ENCODE measurements at regions of chr1 and their contacts with region 1.

Region 1: GRCh38 chr1:113389953-113390834 is at the start of gene MAGI3:
- DNase-seq: peak; percentile 84 to 97 (median 91)
- ATAC-seq: peak; percentile 95
- H3K4me3 ChIP-seq: peak within 1 kb of the TSS; percentile 88
- H3K4me3 Mint-ChIP-seq: peak within 1 kb of the TSS; percentile 84 to 98 (median 94)
- H3K27ac ChIP-seq: peak within 1 kb of the TSS; percentile 71
- H3K27ac Mint-ChIP-seq: peak within 1 kb of the TSS; percentile 38 to 89 (median 85)
- H3K4me1 ChIP-seq: peaks cover 0 to 16% of the 10 kb centered on the region in 2 donors
- H3K4me1 Mint-ChIP-seq: peaks cover 22 to 31% (median 26%) of the 10 kb centered on the region in 7 donors
- H3K27me3 ChIP-seq: no peaks in the 10 kb centered on the region
- H3K27me3 Mint-ChIP-seq: peaks cover 0 to 42% (median 6%) of the 10 kb centered on the region in 5 donors
- total RNA-seq, gene MAGI3: 5.7 to 8.8 (median 7.2) TPM

Region 2: GRCh38 chr1:112715264-112716053 is 674.7 kb before region 1 on chr1 and contains the start of gene PPM1J:
- CTCF ChIA-PET with region 1: no interaction called
- POLR2A ChIA-PET with region 1: no interaction called
- intact Hi-C with region 1: loop called (anchors 1 to 5 kb)
- DNase-seq: peak; percentile 86 to 99 (median 91)
- ATAC-seq: peak; percentile 89
- H3K4me3 ChIP-seq: peak within 1 kb of the TSS; percentile 81
- H3K4me3 Mint-ChIP-seq: peak within 1 kb of the TSS; percentile 86 to 95 (median 92)
- H3K27ac ChIP-seq: peak within 1 kb of the TSS; percentile 34
- H3K27ac Mint-ChIP-seq: peak within 1 kb of the TSS in 8 of 9 donors; percentile 63 to 91 (median 82)
- H3K4me1 ChIP-seq: peaks cover 13% of the 10 kb centered on the region in 2 donors
- H3K4me1 Mint-ChIP-seq: peaks cover 17 to 37% (median 21%) of the 10 kb centered on the region in 7 donors
- H3K27me3 ChIP-seq: no peaks in the 10 kb centered on the region
- H3K27me3 Mint-ChIP-seq: peaks cover 0 to 45% (median 12%) of the 10 kb centered on the region in 5 donors
- total RNA-seq, gene PPM1J: 0.46 to 1.6 (median 0.50) TPM in 3 of 5 experiments, not detected in the others

Region 3: GRCh38 chr1:113452921-113453770 is 63.0 kb after region 1 on chr1:
- CTCF ChIA-PET with region 1: interaction called, 3 read pairs
- POLR2A ChIA-PET with region 1: no interaction called
- intact Hi-C with region 1: loop called in 1 of 2 experiments (anchors 5 kb)
- DNase-seq: peak in 7 of 9 donors; percentile 0 to 24 (median 11)
- ATAC-seq: peak; percentile 42
- H3K4me3 ChIP-seq: no peak overlapping the region
- H3K4me3 Mint-ChIP-seq: no peak overlapping the region
- H3K27ac ChIP-seq: no peak overlapping the region
- H3K27ac Mint-ChIP-seq: no peak overlapping the region
- H3K4me1 ChIP-seq: no peaks in the 10 kb centered on the region
- H3K4me1 Mint-ChIP-seq: peaks cover 0 to 8% (median 0%) of the 10 kb centered on the region in 7 donors
- H3K27me3 ChIP-seq: no peaks in the 10 kb centered on the region
- H3K27me3 Mint-ChIP-seq: peaks cover 0 to 5% (median 0%) of the 10 kb centered on the region in 5 donors

Region 4: DNA sequence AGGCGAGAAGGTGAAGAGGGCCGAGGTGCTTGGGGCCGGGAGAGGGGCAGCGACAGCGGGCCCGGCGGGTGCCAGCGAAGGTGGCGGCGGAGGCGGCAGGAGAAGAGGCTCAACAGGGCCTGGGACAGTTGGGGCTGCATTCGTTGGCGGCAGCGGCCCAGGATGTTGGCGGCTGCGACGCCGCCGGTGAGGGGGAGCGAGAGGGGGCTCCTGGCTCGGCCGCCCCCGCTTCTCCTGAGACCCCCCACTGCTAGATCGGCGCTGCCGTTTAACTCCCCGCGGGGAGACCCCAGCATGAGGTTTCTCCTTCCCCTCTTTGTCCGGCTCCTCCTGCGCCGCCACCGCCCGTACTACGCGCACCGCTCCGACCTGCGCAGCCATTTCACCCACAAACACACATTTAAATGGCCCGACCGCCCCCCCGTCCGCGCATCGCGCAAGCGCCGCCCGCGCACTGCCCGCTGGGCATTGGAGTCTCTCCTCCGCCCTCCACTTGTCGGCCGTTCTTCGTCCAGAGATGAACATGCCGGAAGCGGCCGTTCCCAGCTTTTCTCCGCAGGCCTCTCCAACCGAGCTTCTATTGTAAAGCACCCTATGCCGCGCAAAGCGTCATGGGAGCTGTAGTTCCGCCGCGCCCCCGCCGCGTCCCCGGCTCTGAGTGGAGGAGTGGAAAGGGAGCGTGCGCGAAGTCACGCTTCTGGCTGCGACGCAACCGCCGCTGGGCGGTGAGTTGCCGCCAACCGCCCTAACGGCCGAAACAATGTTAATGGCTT is 421.9 kb after region 1 on chr1 and contains the start of gene RSBN1:
- CTCF ChIA-PET with region 1: no interaction called
- POLR2A ChIA-PET with region 1: no interaction called
- intact Hi-C with region 1: loop called (anchors 1 to 5 kb)
- DNase-seq: peak; percentile 92 to 99 (median 98)
- ATAC-seq: peak; percentile 95
- H3K4me3 ChIP-seq: peak within 1 kb of the TSS; percentile 88
- H3K4me3 Mint-ChIP-seq: peak within 1 kb of the TSS; percentile 91 to 99 (median 97)
- H3K27ac ChIP-seq: peak within 1 kb of the TSS; percentile 97
- H3K27ac Mint-ChIP-seq: peak within 1 kb of the TSS; percentile 96 to 99 (median 98)
- H3K4me1 ChIP-seq: peaks cover 17 to 25% of the 10 kb centered on the region in 2 donors
- H3K4me1 Mint-ChIP-seq: peaks cover 20 to 51% (median 38%) of the 10 kb centered on the region in 7 donors
- H3K27me3 ChIP-seq: no peaks in the 10 kb centered on the region
- H3K27me3 Mint-ChIP-seq: no peaks in the 10 kb centered on the region
- total RNA-seq, gene RSBN1: 29.9 to 58.1 (median 42.0) TPM

Region 5: GRCh38 chr1:113949007-113949406 is 558.8 kb after region 1 on chr1:
- CTCF ChIA-PET with region 1: no interaction called
- POLR2A ChIA-PET with region 1: no interaction called
- intact Hi-C with region 1: loop called in 1 of 2 experiments (anchors 5 kb)
- DNase-seq: peak in 5 of 9 donors; percentile 16 to 53 (median 41)
- ATAC-seq: no peak
- H3K4me3 ChIP-seq: no peak overlapping the region
- H3K4me3 Mint-ChIP-seq: peak overlapping the region in 9 of 10 donors; percentile 36 to 88 (median 72)
- H3K27ac ChIP-seq: peak overlapping the region; percentile 73
- H3K27ac Mint-ChIP-seq: peak overlapping the region in 8 of 9 donors; percentile 92 to 99 (median 97)
- H3K4me1 ChIP-seq: peaks cover 42 to 68% of the 10 kb centered on the region in 2 donors
- H3K4me1 Mint-ChIP-seq: peaks cover 33 to 95% (median 85%) of the 10 kb centered on the region in 7 donors
- H3K27me3 ChIP-seq: no peaks in the 10 kb centered on the region
- H3K27me3 Mint-ChIP-seq: no peaks in the 10 kb centered on the region

Region 6: GRCh38 chr1:115062542-115063011 is 1672.4 kb after region 1 on chr1:
- CTCF ChIA-PET with region 1: no interaction called
- POLR2A ChIA-PET with region 1: no interaction called
- intact Hi-C with region 1: loop called in 1 of 2 experiments (anchors 1 kb)
- DNase-seq: peak; percentile 70 to 97 (median 97)
- ATAC-seq: peak; percentile 97
- H3K4me3 ChIP-seq: peak overlapping the region; percentile 36
- H3K4me3 Mint-ChIP-seq: peak overlapping the region; percentile 60 to 87 (median 78)
- H3K27ac ChIP-seq: peak overlapping the region; percentile 84
- H3K27ac Mint-ChIP-seq: peak overlapping the region; percentile 89 to 100 (median 99)
- H3K4me1 ChIP-seq: peaks cover 32% of the 10 kb centered on the region in 2 donors
- H3K4me1 Mint-ChIP-seq: peaks cover 36 to 59% (median 46%) of the 10 kb centered on the region in 7 donors
- H3K27me3 ChIP-seq: no peaks in the 10 kb centered on the region
- H3K27me3 Mint-ChIP-seq: peaks cover 0 to 6% (median 0%) of the 10 kb centered on the region in 5 donors